Activated CD8-positive, alpha-beta T cell treated with anti-CD3 and anti-CD28 coated beads, Interleukin-2, amount 10 ng/mL, durations not matched to agents 7 days and 5 days (primary cell): ENCODE measurements at regions of chr10 and their contacts with region 1.

Region 1: GRCh38 chr10:12129222-12130111 is at the start of gene SEC61A2:
- DNase-seq: peak; percentile 97
- ATAC-seq: peak; percentile 96
- H3K4me3 Mint-ChIP-seq: peak within 1 kb of the TSS; percentile 84
- H3K27ac Mint-ChIP-seq: peak within 1 kb of the TSS; percentile 80
- H3K4me1 Mint-ChIP-seq: peaks cover 17% of the 10 kb centered on the region
- H3K27me3 Mint-ChIP-seq: no peaks in the 10 kb centered on the region
- total RNA-seq, gene SEC61A2: 9.1 to 9.7 TPM

Region 2: DNA sequence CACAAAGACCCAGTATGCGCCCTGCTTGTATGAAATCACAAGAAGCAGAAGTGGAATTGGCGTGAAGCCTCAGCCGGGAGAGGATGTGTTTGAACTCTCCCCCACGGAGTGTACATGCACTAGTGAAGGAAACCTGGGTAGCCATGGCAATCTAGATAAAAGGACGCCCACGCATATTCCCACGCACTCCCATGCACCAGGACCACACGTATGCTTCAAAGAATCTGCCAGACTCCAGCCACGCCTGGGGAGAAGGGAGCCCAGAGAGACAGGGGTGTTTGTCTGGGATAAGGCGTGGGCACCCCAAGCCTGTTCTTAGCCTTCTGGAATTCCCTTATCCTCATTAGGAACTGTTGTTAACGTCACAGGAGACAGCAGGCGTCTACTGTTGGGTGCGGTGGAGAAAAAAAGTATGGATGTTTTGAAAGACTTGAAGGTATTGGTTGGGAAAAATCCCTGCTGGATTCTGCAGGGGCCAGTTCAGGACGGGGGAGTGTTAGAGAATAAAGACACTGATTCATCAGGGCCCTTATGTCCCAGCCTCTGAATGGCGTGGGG is 416.2 kb before region 1 on chr10:
- CTCF ChIA-PET with region 1: no interaction called
- POLR2A ChIA-PET with region 1: no interaction called
- DNase-seq: no peak
- ATAC-seq: no peak
- H3K4me3 Mint-ChIP-seq: no peak overlapping the region
- H3K27ac Mint-ChIP-seq: no peak overlapping the region
- H3K4me1 Mint-ChIP-seq: peaks cover 34% of the 10 kb centered on the region
- H3K27me3 Mint-ChIP-seq: peaks cover 55% of the 10 kb centered on the region

Region 3: DNA sequence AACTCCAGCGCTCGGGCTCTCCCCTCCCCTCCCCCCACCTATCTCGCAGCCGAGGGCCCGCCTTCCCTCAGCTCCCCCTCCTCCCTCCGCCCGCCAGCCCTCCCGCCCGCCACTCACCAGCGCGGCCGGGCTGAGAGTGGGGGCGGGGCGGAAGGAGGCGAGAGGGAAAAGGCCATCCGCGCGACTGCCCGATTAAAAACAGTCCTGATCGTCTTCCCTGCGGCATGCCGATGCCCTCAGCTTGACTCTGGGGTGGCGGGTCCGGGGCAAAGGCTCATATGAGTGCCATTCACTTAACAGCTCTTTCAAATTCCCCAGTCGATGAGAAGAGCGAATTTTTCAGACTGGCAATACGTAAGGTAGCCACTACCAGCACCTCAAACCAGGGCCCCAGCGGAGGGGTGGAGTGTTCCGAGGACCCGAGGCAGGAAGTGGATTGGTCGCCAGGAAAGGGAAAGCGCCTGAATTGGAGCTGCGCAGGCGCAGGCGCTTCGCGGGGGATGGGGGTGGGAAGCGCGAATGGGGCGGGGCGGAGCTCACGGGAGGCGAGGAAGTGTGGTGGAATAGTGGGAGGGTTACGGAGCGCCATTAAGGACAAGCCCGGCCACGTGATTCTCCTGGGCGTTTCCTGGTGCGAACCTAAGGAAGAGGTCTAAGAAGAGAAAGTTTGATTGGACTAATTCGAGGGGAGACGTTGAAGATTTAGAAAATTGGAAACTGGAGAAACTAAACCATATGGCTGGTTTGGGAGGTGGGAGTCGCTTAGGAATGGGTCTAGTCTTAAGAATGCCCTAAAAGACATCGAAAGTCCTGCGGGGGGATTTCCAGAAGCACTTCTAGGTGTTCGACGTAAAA is 86.4 kb before region 1 on chr10 and contains the start of gene UPF2:
- CTCF ChIA-PET with region 1: interaction called, 3 read pairs
- POLR2A ChIA-PET with region 1: interaction called, 11 read pairs
- DNase-seq: peak; percentile 97
- ATAC-seq: peak; percentile 91
- H3K4me3 Mint-ChIP-seq: peak within 1 kb of the TSS; percentile 90
- H3K27ac Mint-ChIP-seq: peak within 1 kb of the TSS; percentile 100
- H3K4me1 Mint-ChIP-seq: peaks cover 27% of the 10 kb centered on the region
- H3K27me3 Mint-ChIP-seq: peaks cover 3% of the 10 kb centered on the region
- total RNA-seq, gene UPF2: 32.7 to 33.3 TPM